PC-9 (cell line): ENCODE measurements at regions of chr6 and their contacts with region 1.

Region 1: GRCh38 chr6:30616811-30617564 is at the start of gene PPP1R10:
- DNase-seq: peak; percentile 98 to 99
- H3K4me3 ChIP-seq: peak within 1 kb of the TSS; percentile 87
- H3K27ac ChIP-seq: peak within 1 kb of the TSS; percentile 86
- H3K4me1 ChIP-seq: peaks cover 35% of the 10 kb centered on the region
- H3K27me3 ChIP-seq: no peaks in the 10 kb centered on the region
- CTCF ChIP-seq: no peak
- total RNA-seq, gene PPP1R10: 47.6 and 69.5 TPM in 2 replicates

Region 2: GRCh38 chr6:30463651-30464618 is 153.1 kb before region 1 on chr6:
- CTCF ChIA-PET with region 1: no interaction called
- POLR2A ChIA-PET with region 1: interaction called, 15 read pairs
- intact Hi-C with region 1: no loop called
- DNase-seq: peak in 1 of 2 experiments; percentile 25
- H3K4me3 ChIP-seq: no peak overlapping the region
- H3K27ac ChIP-seq: no peak overlapping the region
- H3K4me1 ChIP-seq: no peaks in the 10 kb centered on the region; the same call in 1 of the 2 replicates
- H3K27me3 ChIP-seq: peaks cover 94% of the 10 kb centered on the region
- CTCF ChIP-seq: no peak

Region 3: DNA sequence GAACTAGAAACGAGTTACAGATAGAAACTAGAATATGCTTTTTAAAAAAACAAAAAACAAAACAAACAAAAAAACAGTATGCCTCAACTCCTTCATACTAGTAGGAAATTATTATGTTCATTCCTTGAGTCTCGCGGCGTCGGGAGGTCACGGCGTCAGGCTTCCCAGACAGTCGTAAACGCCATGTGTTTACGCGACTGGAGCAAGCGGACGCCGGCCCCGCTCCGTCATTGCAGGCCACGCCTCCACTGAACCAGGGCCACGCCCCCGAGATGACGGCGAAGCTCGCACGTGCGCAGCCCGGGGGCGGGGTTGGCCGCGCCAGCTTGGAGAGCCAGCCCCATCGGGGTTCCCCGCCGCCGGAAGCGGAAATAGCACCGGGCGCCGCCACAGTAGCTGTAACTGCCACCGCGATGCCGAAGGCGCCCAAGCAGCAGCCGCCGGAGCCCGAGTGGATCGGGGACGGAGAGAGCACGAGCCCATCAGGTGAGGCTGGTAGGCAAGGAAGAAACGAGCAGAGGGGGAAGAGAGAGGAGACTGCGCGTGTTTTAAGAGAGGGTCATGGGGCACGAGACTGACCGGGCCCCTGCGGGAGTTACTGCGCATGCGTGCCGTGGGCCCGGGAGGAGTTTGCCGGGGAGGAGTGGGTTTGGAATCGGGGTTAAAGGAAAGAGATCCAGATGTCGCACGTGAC is 45.8 kb before region 1 on chr6 and contains the start of gene ABCF1:
- CTCF ChIA-PET with region 1: interaction called, 4 read pairs
- POLR2A ChIA-PET with region 1: interaction called, 7 read pairs
- intact Hi-C with region 1: loop called (anchors 2 kb)
- DNase-seq: peak; percentile 85 to 99
- H3K4me3 ChIP-seq: peak within 1 kb of the TSS; percentile 80
- H3K27ac ChIP-seq: peak within 1 kb of the TSS; percentile 49
- H3K4me1 ChIP-seq: peaks cover 33% of the 10 kb centered on the region
- H3K27me3 ChIP-seq: no peaks in the 10 kb centered on the region
- CTCF ChIP-seq: no peak
- total RNA-seq, gene ABCF1: 64.0 and 73.7 TPM in 2 replicates

Region 4: GRCh38 chr6:30672445-30673253 is 55.7 kb after region 1 on chr6 and contains the start of gene DHX16:
- CTCF ChIA-PET with region 1: no interaction called
- POLR2A ChIA-PET with region 1: interaction called, 48 read pairs
- intact Hi-C with region 1: no loop called
- DNase-seq: peak; percentile 88 to 96
- H3K4me3 ChIP-seq: peak within 1 kb of the TSS; percentile 89
- H3K27ac ChIP-seq: no peak within 1 kb of the TSS
- H3K4me1 ChIP-seq: peaks cover 17% of the 10 kb centered on the region
- H3K27me3 ChIP-seq: no peaks in the 10 kb centered on the region
- CTCF ChIP-seq: peak; percentile 84
- total RNA-seq, gene DHX16: 42.1 and 43.5 TPM in 2 replicates

Region 5: GRCh38 chr6:30730601-30731435 is 113.8 kb after region 1 on chr6:
- CTCF ChIA-PET with region 1: interaction called, 16 read pairs
- POLR2A ChIA-PET with region 1: interaction called, 9 read pairs
- intact Hi-C with region 1: no loop called
- DNase-seq: peak; percentile 89 to 92
- H3K4me3 ChIP-seq: no peak overlapping the region
- H3K27ac ChIP-seq: peak overlapping the region; percentile 18; the same call in 1 of the 2 replicates
- H3K4me1 ChIP-seq: peaks cover 16% of the 10 kb centered on the region
- H3K27me3 ChIP-seq: no peaks in the 10 kb centered on the region
- CTCF ChIP-seq: peak; percentile 80

Region 6: GRCh38 chr6:31538805-31539400 is 921.9 kb after region 1 on chr6:
- CTCF ChIA-PET with region 1: no interaction called
- POLR2A ChIA-PET with region 1: no interaction called
- intact Hi-C with region 1: no loop called
- DNase-seq: no peak
- H3K4me3 ChIP-seq: peak overlapping the region; percentile 75; the same call in 1 of the 2 replicates
- H3K27ac ChIP-seq: no peak overlapping the region
- H3K4me1 ChIP-seq: peaks cover 29% of the 10 kb centered on the region
- H3K27me3 ChIP-seq: no peaks in the 10 kb centered on the region
- CTCF ChIP-seq: no peak